ENCODE measurements at regions of chr7 and their contacts with region 1.

Region 1: GRCh38 chr7:74656837-74657691 is 454 bp upstream of the GTF2I start:
- DNase-seq: peak; percentile 97
- H3K4me3 ChIP-seq: peak overlapping the region; percentile 83 to 97 (median 87)
- H3K27ac ChIP-seq: peak overlapping the region; percentile 55
- H3K4me1 ChIP-seq: peaks cover 34% of the 10 kb centered on the region
- H3K27me3 ChIP-seq: no peaks in the 10 kb centered on the region
- CTCF ChIP-seq: peak in 1 of 2 donors; percentile 19
- POLR2A ChIP-seq: peak; percentile 66

Region 2: DNA sequence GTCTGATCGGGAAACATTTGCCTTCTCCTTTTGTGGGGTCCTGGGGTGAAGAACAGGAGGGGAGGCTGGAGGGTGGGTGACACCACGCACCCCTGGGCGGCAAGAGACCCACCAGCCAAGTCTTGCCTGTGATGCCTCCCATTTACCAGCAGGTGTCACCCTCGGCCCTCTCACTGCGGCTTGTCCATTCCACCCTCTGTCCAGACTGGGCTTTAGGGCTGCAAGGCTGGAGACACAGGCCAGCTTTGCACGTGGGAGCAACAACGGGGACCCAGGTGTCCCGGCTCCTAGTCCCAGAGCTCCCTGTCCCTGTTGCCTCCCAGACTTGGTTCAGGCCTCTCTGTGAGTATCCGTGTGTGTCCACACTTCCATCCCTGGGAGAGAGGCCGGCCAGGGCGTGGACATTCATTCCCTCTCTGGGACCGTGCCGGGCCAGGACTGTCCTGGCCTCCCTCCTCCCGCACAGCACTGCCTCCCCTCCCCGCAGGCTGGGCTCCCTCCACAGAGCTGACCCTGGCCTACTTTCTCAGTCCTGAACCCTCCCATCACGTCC is 239.6 kb before region 1 on chr7:
- CTCF ChIA-PET with region 1: no interaction called
- POLR2A ChIA-PET with region 1: no interaction called
- dilution Hi-C with region 1: no loop called
- intact Hi-C with region 1: loop called (anchors 5 kb)
- DNase-seq: peak; percentile 57
- H3K4me3 ChIP-seq: no peak overlapping the region
- H3K27ac ChIP-seq: no peak overlapping the region
- H3K4me1 ChIP-seq: no peaks in the 10 kb centered on the region
- H3K27me3 ChIP-seq: no peaks in the 10 kb centered on the region
- CTCF ChIP-seq: peak; percentile 87 to 94
- POLR2A ChIP-seq: no peak

Region 3: DNA sequence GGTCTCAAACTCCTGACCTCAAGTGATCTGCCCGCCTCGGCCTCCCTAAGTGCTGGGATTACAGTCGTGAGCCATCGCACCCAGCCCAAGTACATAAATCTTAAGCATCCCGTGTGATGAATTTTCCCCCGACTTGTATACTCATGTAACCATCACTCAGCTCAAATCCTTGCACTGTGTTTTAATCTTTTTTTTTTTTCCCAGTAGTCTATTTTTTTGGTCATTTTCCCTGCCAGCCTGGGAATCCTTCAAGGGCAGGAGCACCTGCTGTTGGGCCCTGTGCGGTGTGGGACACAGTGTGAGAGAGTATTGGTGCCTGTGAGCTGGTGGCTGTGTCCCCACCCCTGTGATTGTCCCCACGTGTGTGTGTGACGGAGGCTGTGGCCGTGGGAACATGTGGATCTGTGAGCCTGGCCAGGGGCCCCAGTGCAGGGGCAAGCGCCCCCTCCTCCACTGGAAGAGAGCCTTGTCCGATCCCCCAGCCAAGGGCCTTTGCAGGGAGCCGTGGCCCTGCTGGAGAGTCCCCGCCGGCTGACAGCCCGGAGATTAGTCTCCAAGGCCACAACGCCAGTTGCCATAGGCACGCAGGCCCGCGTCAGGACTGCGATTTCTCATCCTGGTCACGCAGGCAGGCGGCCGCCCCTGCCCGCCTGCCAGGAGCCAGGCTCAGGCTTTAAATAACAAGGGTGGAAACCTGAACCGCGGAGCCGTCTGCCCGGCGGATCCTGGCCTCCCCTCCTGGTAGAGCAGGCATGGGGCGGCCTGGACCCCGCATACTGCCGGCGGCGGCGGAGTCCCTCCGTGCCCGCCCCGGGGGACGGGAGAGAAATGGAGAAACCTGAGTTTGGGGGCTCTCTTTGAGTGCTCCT is 176.9 kb before region 1 on chr7:
- CTCF ChIA-PET with region 1: no interaction called
- POLR2A ChIA-PET with region 1: no interaction called
- dilution Hi-C with region 1: no loop called
- intact Hi-C with region 1: loop called (anchors 2 kb)
- DNase-seq: peak; percentile 82
- H3K4me3 ChIP-seq: peak overlapping the region; percentile 11 to 47 (median 20)
- H3K27ac ChIP-seq: peak overlapping the region; percentile 92
- H3K4me1 ChIP-seq: peaks cover 33% of the 10 kb centered on the region
- H3K27me3 ChIP-seq: no peaks in the 10 kb centered on the region
- CTCF ChIP-seq: no peak
- POLR2A ChIP-seq: no peak

Region 4: DNA sequence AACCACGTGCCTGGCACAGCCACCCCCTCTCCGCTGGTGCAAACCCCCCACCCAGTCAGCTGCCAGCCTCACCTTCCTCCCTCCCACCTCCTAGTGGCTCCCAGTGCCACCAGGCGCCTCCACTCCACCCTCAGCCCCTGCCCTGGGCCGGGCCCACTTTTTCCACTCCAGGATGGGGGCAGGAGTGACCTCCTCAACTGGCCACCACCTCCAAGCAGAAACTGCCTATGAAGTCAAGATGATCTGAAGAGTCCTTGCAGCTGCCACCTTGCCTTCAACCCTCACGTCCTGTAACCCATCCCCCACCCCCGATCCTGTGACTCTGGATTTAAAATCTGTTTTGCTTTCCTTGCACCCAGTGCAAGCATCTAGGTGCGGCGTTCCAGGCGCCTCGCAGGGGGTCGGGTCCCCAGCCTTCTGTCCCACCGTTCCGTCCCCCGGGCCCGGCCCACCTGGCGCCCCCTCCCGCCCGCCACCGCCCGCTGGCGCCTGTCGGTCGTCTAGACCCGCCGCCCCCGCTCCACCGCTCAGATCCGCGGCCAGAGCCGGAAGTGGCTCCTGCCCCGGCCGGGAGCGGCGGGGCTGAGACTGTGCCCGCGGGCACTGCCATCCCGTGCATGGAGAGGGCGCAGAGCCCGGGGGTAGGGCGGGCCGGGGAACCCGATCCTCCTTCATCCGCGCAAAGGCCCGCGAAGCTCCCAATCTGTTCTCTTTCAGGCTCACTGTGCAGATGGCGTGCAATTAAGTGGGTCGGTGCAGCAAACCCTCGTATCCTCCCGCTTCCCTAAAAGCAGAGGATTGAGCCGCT is 50.8 kb before region 1 on chr7:
- CTCF ChIA-PET with region 1: no interaction called
- POLR2A ChIA-PET with region 1: no interaction called
- dilution Hi-C with region 1: no loop called
- intact Hi-C with region 1: loop called (anchors 5 kb)
- DNase-seq: peak; percentile 24
- H3K4me3 ChIP-seq: peak overlapping the region; percentile 27 to 45 (median 34)
- H3K27ac ChIP-seq: no peak overlapping the region
- H3K4me1 ChIP-seq: peaks cover 10% of the 10 kb centered on the region
- H3K27me3 ChIP-seq: no peaks in the 10 kb centered on the region
- CTCF ChIP-seq: no peak
- POLR2A ChIP-seq: no peak

Region 5: DNA sequence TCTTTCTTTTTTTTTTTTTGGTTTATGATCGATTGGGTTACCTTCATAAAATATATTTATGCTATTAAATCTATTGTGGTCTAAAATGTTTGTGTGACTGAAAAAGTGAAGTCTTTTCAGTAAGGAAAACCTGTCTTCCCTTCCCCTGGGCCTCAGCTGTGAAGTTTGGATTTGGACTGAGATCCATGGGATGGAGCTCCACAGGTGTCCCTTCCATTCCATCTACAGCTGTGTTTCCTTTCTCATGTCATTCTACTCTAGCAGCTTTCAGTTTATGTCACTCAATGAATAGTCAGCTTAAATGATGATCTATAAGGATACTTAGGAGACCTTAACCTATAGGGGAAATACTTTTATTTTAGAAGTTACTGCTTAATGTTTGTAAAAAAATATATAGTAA is 68.8 kb after region 1 on chr7:
- CTCF ChIA-PET with region 1: no interaction called
- POLR2A ChIA-PET with region 1: no interaction called
- dilution Hi-C with region 1: no loop called
- intact Hi-C with region 1: no loop called
- DNase-seq: no peak
- H3K4me3 ChIP-seq: no peak overlapping the region
- H3K27ac ChIP-seq: no peak overlapping the region
- H3K4me1 ChIP-seq: no peaks in the 10 kb centered on the region
- H3K27me3 ChIP-seq: no peaks in the 10 kb centered on the region
- CTCF ChIP-seq: no peak
- POLR2A ChIP-seq: no peak